A673 (cell line): ENCODE measurements at regions of chr7 and their contacts with region 1.

Region 1: DNA sequence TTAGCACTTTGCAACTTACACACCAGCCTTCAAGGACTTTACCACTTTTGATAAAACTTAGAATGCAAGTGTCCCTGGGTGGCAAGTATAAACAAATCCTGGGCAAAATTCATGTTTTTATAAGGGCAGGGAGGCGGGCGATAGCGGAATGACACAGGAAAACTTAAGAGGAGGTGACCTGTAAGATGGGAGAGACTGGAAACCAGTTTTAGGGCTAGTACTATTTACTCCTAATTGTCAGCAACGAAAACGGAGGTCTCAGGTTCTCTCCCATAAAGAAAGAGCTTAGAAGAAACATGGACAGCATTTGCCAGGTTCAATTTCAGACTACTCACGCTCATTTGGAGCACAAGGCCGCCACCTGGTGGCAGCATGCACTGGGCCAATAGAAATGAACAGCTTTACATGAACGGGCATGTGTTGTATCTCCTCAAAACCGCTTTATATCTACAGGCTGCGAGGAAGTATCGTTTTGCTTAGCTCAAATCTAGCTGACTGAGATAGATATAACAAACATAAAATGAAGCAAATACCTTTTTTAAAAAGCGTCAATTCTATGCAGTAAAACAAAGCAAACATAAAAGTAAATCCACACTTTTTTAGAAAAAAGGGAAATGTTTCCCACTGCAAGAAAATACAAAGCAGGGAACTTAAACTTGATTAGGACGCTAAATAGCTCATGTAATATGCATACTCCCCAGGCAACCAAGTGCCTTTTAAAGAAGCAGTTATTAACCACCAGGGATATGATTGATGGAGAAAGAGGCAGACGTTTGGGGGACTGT is 37.6 kb upstream of the SVOPL start:
- DNase-seq: peak; percentile 89
- H3K4me3 ChIP-seq: no peak overlapping the region
- H3K27ac ChIP-seq: no peak overlapping the region
- H3K4me1 ChIP-seq: no peaks in the 10 kb centered on the region
- H3K27me3 ChIP-seq: no peaks in the 10 kb centered on the region
- CTCF ChIP-seq: peak; percentile 98

Region 2: GRCh38 chr7:137898839-137899721 is 839.7 kb before region 1 on chr7:
- CTCF ChIA-PET with region 1: interaction called, 8 read pairs
- POLR2A ChIA-PET with region 1: no interaction called
- intact Hi-C with region 1: loop called (anchors 2 kb)
- DNase-seq: peak; percentile 90
- H3K4me3 ChIP-seq: peak overlapping the region; percentile 27
- H3K27ac ChIP-seq: peak overlapping the region; percentile 55
- H3K4me1 ChIP-seq: peaks cover 15% of the 10 kb centered on the region
- H3K27me3 ChIP-seq: no peaks in the 10 kb centered on the region
- CTCF ChIP-seq: peak; percentile 94

Region 3: DNA sequence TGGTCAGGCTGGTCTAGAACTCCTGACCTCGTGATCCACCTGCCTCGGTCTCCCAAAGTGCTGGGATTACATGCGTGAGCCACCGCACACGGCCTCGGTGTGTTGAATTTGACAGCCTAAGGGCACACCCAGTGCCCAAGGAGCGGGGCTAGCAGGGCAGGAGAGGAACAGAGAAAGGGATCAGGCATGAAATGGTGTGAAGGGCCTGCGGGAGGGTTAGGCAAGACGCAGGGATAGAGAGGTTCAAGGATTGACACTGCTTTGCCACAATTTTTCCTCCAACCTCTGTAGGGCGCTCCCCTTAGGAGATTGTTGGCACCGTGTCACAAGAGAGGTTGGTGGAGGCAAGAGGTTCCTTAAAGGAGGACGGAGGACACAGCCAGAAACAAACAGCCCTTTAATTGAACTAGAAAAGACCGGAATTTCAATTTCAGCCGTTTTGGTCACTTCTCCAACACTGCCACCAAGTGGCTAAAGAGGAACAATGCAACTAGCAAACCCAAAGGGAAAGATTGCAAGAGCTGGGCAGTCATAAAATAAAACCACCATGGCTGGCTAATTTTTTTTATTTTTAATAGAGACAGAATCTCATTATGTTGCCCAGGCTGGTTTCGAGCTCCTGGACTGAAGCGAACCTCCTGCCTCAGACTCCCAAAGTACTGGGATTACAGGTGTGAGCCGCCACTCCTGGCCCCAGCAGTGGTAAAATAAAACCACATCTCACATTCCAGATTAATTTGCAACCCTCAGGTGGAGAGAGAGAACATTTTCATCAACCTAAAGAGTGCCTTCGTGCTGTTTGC is 730.0 kb before region 1 on chr7:
- CTCF ChIA-PET with region 1: no interaction called
- POLR2A ChIA-PET with region 1: no interaction called
- intact Hi-C with region 1: loop called (anchors 5 kb)
- DNase-seq: peak; percentile 74
- H3K4me3 ChIP-seq: no peak overlapping the region
- H3K27ac ChIP-seq: no peak overlapping the region
- H3K4me1 ChIP-seq: no peaks in the 10 kb centered on the region
- H3K27me3 ChIP-seq: no peaks in the 10 kb centered on the region
- CTCF ChIP-seq: peak; percentile 84

Region 4: DNA sequence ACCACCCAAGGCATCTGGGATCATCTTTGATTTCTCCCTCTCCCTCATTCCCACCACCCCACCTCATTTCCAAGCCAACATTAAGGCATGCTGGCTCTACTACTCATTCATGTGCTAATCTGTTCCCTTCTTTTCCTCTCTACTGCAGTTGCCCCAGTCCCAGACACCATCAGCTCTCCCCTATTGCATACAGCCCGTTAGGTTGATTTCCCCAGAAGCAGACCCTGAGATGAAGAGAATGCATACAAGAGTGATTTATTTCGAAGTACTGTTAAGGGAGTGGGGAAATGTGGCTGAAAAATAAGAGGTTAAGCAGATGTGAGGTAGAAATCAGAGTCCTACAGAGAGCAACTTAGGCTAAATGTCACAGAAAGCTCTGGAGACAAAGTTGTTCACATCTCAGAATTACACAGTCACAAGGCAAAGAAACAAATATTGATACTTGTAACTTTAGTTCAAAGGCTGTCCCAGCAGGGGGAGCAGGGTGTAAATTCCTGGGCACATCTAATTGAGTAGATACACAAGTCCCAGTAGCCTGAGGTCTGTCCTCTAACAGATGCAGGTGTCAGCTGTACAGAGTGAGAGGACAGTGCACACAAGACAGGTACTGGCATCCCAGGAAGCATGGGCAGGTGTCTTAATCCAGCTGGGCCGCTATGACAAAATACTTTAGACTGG is 641.5 kb before region 1 on chr7:
- CTCF ChIA-PET with region 1: no interaction called
- POLR2A ChIA-PET with region 1: no interaction called
- intact Hi-C with region 1: loop called (anchors 1 kb)
- DNase-seq: peak; percentile 38
- H3K4me3 ChIP-seq: no peak overlapping the region
- H3K27ac ChIP-seq: no peak overlapping the region
- H3K4me1 ChIP-seq: no peaks in the 10 kb centered on the region
- H3K27me3 ChIP-seq: no peaks in the 10 kb centered on the region
- CTCF ChIP-seq: peak; percentile 39

Region 5: GRCh38 chr7:138161600-138162081 is 577.1 kb before region 1 on chr7:
- CTCF ChIA-PET with region 1: interaction called, 36 read pairs
- POLR2A ChIA-PET with region 1: no interaction called
- intact Hi-C with region 1: loop called (anchors 1 kb)
- DNase-seq: peak; percentile 91
- H3K4me3 ChIP-seq: no peak overlapping the region
- H3K27ac ChIP-seq: no peak overlapping the region
- H3K4me1 ChIP-seq: no peaks in the 10 kb centered on the region
- H3K27me3 ChIP-seq: no peaks in the 10 kb centered on the region
- CTCF ChIP-seq: peak; percentile 72

Region 6: GRCh38 chr7:138459413-138460175 is 279.1 kb before region 1 on chr7:
- CTCF ChIA-PET with region 1: no interaction called
- POLR2A ChIA-PET with region 1: no interaction called
- intact Hi-C with region 1: loop called (anchors 10 kb)
- DNase-seq: no peak
- H3K4me3 ChIP-seq: peak overlapping the region; percentile 67
- H3K27ac ChIP-seq: no peak overlapping the region
- H3K4me1 ChIP-seq: no peaks in the 10 kb centered on the region
- H3K27me3 ChIP-seq: no peaks in the 10 kb centered on the region
- CTCF ChIP-seq: no peak; the same call in 1 of the 2 replicates

Region 7: GRCh38 chr7:138726288-138726687 is 12.5 kb before region 1 on chr7:
- CTCF ChIA-PET with region 1: interaction called, 11 read pairs
- POLR2A ChIA-PET with region 1: no interaction called
- intact Hi-C with region 1: no loop called
- DNase-seq: no peak
- H3K4me3 ChIP-seq: no peak overlapping the region
- H3K27ac ChIP-seq: no peak overlapping the region
- H3K4me1 ChIP-seq: no peaks in the 10 kb centered on the region
- H3K27me3 ChIP-seq: no peaks in the 10 kb centered on the region
- CTCF ChIP-seq: 0 out of 2 replicates have a peak, but pooled peaks have one; percentile 23

Region 8: GRCh38 chr7:138799336-138800005 is 60.7 kb after region 1 on chr7:
- CTCF ChIA-PET with region 1: no interaction called
- POLR2A ChIA-PET with region 1: no interaction called
- intact Hi-C with region 1: no loop called
- DNase-seq: no peak
- H3K4me3 ChIP-seq: no peak overlapping the region
- H3K27ac ChIP-seq: no peak overlapping the region
- H3K4me1 ChIP-seq: no peaks in the 10 kb centered on the region
- H3K27me3 ChIP-seq: peaks cover 50% of the 10 kb centered on the region
- CTCF ChIP-seq: no peak